ENCODE measurements at regions of chr4 and their contacts with region 1.

Region 1: GRCh38 chr4:67727124-67727850 is 26.3 kb upstream of the UBA6 start:
- DNase-seq: peak in 1 of 4 experiments; percentile 41
- ATAC-seq: peak; percentile 48
- H3K4me3 ChIP-seq: no peak overlapping the region
- H3K27ac ChIP-seq: peak overlapping the region; percentile 49; the same call in 2 of the 3 replicates
- H3K4me1 ChIP-seq: peaks cover 5 to 21% of the 10 kb centered on the region in 2 experiments
- H3K27me3 ChIP-seq: no peaks in the 10 kb centered on the region
- CTCF ChIP-seq: no peak
- EP300 ChIP-seq: no peak
- POLR2A ChIP-seq: no peak
- RAD21 ChIP-seq: no peak

Region 2: GRCh38 chr4:67909905-67910584 is 182.8 kb after region 1 on chr4:
- CTCF ChIA-PET with region 1: no interaction called
- POLR2A ChIA-PET with region 1: no interaction called
- in situ Hi-C with region 1: no loop called
- intact Hi-C with region 1: loop called (anchors 10 kb)
- DNase-seq: peak in 3 of 4 experiments; percentile 13 to 30 (median 14)
- ATAC-seq: peak; percentile 61; the same call in 2 of the 3 replicates
- H3K4me3 ChIP-seq: no peak overlapping the region
- H3K27ac ChIP-seq: no peak overlapping the region
- H3K4me1 ChIP-seq: no peaks in the 10 kb centered on the region
- H3K27me3 ChIP-seq: no peaks in the 10 kb centered on the region
- CTCF ChIP-seq: peak in 2 of 3 experiments; percentile 42 to 69; a peak in 4 of 6 replicates
- EP300 ChIP-seq: no peak
- POLR2A ChIP-seq: no peak
- RAD21 ChIP-seq: peak in 1 of 2 experiments; percentile 63; a peak in 3 of 4 replicates